Pancreas (tissue), 10 donors: ENCODE measurements at regions of chr11 and their contacts with region 1.

Region 1: GRCh38 chr11:125164422-125165110 is at the start of gene PKNOX2:
- DNase-seq: peak; percentile 65 to 95 (median 84)
- ATAC-seq: peak; percentile 60 to 83 (median 75)
- H3K4me3 ChIP-seq: peak within 1 kb of the TSS; percentile 55 to 72 (median 62)
- H3K27ac ChIP-seq: peak within 1 kb of the TSS; percentile 77 to 85 (median 81)
- H3K4me1 ChIP-seq: peaks cover 16 to 25% (median 23%) of the 10 kb centered on the region in 3 donors
- H3K27me3 ChIP-seq: no peaks in the 10 kb centered on the region
- CTCF ChIP-seq: peak; percentile 42 to 63 (median 54)
- total RNA-seq, gene PKNOX2: 4.3 to 8.1 (median 5.9) TPM

Region 2: GRCh38 chr11:125345421-125346178 is 181.0 kb after region 1 on chr11:
- intact Hi-C with region 1: loop called in 2 of 3 experiments (anchors 5 kb)
- DNase-seq: peak; percentile 51 to 88 (median 76)
- ATAC-seq: peak; percentile 85 to 91 (median 86)
- H3K4me3 ChIP-seq: no peak overlapping the region
- H3K27ac ChIP-seq: no peak overlapping the region
- H3K4me1 ChIP-seq: peaks cover 0 to 4% (median 3%) of the 10 kb centered on the region in 3 donors
- H3K27me3 ChIP-seq: no peaks in the 10 kb centered on the region
- CTCF ChIP-seq: peak; percentile 58 to 90 (median 88)

Region 3: DNA sequence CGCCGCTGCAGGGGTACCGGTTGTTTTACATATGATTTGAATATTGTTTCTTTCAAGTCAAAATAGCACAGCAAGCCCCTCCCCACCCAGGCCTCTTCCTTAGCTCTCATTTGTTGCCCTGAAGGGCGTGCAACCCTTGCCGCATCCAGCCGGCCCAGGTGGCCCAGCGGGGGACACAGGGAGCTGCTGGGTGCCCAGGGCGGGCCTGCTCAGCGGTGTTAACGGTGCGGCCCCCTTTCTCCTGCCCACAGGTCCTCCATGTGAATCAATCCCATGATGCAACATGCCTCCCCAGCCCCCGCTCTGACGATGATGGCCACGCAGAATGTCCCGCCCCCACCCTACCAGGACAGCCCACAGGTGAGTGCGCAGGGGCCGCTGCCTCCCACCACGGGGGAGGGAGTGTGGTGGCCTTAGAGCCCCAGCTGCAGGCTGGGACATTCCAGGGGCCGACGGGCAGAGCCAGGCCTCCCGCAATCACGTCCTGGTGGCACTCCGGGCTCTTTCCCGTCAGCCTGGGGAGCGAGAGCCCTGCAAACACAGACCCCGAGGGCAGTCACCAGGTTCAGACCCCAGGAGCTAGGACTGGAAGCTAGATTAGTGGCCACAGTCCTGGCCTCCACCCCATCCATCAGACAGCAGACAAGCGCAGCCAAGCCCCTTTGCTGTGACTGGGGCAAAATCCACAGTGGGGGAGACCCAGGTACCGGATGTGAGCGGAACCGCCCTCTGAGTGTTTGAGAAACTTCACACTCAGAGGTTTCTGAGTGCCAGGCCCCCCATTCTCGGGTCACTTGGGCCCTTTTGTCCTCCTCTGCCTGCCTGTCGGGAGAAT is 186.7 kb after region 1 on chr11:
- intact Hi-C with region 1: loop called in 2 of 3 experiments (anchors 5 kb)
- DNase-seq: no peak
- ATAC-seq: no peak
- H3K4me3 ChIP-seq: no peak overlapping the region
- H3K27ac ChIP-seq: no peak overlapping the region
- H3K4me1 ChIP-seq: no peaks in the 10 kb centered on the region
- H3K27me3 ChIP-seq: no peaks in the 10 kb centered on the region
- CTCF ChIP-seq: no peak

Region 4: GRCh38 chr11:125663910-125664309 is 499.3 kb after region 1 on chr11:
- intact Hi-C with region 1: no loop called
- DNase-seq: no peak
- ATAC-seq: no peak
- H3K4me3 ChIP-seq: no peak overlapping the region
- H3K27ac ChIP-seq: no peak overlapping the region
- H3K4me1 ChIP-seq: no peaks in the 10 kb centered on the region
- H3K27me3 ChIP-seq: no peaks in the 10 kb centered on the region
- CTCF ChIP-seq: no peak